ENCODE measurements at regions of chr3 and their contacts with region 1.

Region 1: DNA sequence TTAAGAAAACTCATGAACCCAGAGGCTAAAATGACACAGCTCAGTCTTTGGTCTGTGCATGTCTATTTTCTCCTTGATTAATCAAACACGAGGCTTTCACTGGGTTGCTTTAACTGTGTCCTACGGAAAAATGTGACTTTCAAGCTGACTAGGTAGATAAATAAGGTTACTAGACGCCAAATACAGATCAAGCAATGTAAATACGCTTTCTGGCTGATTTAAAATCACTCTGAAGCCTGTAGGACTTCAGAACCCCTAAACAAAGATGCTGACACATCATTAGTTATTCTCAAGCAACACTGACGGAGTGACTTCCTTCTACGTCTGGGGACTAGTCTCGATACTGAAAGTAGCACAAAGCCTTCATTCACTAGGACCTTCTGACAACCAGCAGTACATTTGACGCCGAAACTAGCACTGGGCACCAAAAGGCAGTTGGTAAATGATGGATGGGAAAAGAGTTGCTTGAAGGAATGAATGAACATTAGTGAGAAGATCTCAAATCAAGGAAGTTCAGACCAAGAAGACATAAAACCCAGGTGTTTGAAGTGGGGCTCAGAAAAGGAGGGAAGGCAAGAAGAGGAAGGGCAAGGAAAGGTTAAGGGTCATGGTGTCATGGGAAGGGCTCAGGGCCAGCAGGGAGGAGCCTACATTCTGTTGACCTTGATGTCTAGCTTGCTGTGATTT is 67.1 kb upstream of the CDV3 start:
- DNase-seq: no peak
- H3K4me3 ChIP-seq: no peak overlapping the region
- H3K27ac ChIP-seq: no peak overlapping the region
- H3K27me3 ChIP-seq: peaks cover 4% of the 10 kb centered on the region
- CTCF ChIP-seq: no peak

Region 2: GRCh38 chr3:133256787-133257483 is 249.4 kb before region 1 on chr3:
- CTCF ChIA-PET with region 1: no interaction called
- POLR2A ChIA-PET with region 1: no interaction called
- DNase-seq: no peak
- H3K4me3 ChIP-seq: no peak overlapping the region
- H3K27ac ChIP-seq: no peak overlapping the region
- H3K27me3 ChIP-seq: no peaks in the 10 kb centered on the region
- CTCF ChIP-seq: no peak

Region 3: DNA sequence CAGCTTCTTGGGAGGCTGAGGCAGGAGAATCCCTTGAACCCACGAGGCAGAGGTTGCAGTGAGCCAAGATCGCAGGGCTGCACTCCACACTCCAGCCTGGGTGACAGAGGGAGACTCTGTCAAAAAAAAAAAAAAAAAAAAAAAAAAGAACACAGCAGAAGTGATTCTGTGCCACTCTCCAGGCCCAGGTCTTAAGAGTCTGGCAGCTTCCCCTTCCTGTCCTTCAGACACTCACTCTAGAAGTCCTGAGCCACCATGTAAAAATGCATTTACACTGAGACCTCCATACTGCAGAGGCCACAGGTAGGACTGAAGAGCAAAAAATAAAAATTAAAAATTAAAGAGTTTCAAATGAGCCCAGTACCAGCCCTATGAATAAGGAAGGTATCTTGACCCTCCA is 55.3 kb after region 1 on chr3:
- CTCF ChIA-PET with region 1: interaction called, 11 read pairs
- POLR2A ChIA-PET with region 1: no interaction called
- DNase-seq: no peak
- H3K4me3 ChIP-seq: no peak overlapping the region
- H3K27ac ChIP-seq: no peak overlapping the region
- H3K27me3 ChIP-seq: no peaks in the 10 kb centered on the region
- CTCF ChIP-seq: no peak

Measured in AG04450 (cell line).